Esophagus muscularis mucosa (tissue), 4 donors: ENCODE measurements at regions of chr7 and their contacts with region 1.

Region 1: DNA sequence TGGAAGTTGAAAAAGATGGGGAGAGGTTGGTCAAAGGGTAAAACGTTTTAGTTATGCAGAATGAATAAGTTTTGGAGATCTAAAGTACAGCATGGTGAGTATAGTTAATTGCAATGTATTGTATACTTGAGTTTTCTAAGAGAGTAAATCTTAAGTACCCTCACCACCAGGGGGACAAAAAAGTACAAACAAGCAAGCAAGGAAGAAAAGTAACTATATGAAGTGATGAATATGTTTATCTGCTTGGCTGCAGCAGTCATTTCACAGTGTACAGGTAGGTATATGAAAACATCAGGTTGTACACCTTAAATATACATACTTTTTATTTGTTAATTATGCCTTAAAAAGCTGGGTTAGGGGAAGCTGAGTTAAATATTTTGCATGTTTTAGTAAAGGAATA is 157.3 kb downstream of the PCLO start:
- DNase-seq: no peak
- H3K4me3 ChIP-seq: no peak overlapping the region
- H3K27ac ChIP-seq: no peak overlapping the region
- H3K4me1 ChIP-seq: no peaks in the 10 kb centered on the region
- H3K27me3 ChIP-seq: no peaks in the 10 kb centered on the region
- CTCF ChIP-seq: no peak
- EP300 ChIP-seq: no peak
- POLR2A ChIP-seq: no peak

Region 2: DNA sequence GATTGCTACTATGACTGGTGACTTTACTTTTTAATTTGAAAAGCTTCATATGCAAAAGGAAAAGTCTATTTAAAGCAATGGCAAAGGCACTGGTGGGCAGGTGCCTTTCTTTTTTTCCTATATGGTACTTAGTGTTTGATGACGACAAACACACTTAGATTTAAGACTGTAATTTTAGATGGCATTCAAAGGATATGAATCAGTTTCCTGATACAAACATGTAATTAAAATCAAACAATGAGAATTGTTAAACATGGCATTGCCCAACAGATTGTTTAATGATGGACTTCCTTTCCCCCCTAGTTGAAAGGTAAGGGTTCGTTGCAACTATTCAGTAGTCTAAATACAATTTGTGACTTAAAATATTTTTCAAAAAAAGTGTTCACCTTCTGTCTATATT is 1980.0 kb before region 1 on chr7:
- intact Hi-C with region 1: no loop called
- DNase-seq: no peak
- H3K4me3 ChIP-seq: no peak overlapping the region
- H3K27ac ChIP-seq: no peak overlapping the region
- H3K4me1 ChIP-seq: no peaks in the 10 kb centered on the region
- H3K27me3 ChIP-seq: no peaks in the 10 kb centered on the region
- CTCF ChIP-seq: no peak
- EP300 ChIP-seq: no peak
- POLR2A ChIP-seq: no peak

Region 3: GRCh38 chr7:82805527-82805960 is 199.9 kb before region 1 on chr7:
- intact Hi-C with region 1: loop called (anchors 5 kb)
- DNase-seq: no peak
- H3K4me3 ChIP-seq: no peak overlapping the region
- H3K27ac ChIP-seq: no peak overlapping the region
- H3K4me1 ChIP-seq: no peaks in the 10 kb centered on the region
- H3K27me3 ChIP-seq: no peaks in the 10 kb centered on the region
- CTCF ChIP-seq: no peak
- EP300 ChIP-seq: no peak
- POLR2A ChIP-seq: no peak